ENCODE measurements at regions of chr9 and their contacts with region 1.

Region 1: GRCh38 chr9:72292256-72292682 is 72.7 kb downstream of the ZFAND5 start:
- DNase-seq: peak in 2 of 4 donors; percentile 19 to 29
- ATAC-seq: peak; percentile 68
- H3K4me3 ChIP-seq: no peak overlapping the region
- H3K27ac ChIP-seq: peak overlapping the region; percentile 57 to 81
- H3K4me1 ChIP-seq: peaks cover 6 to 35% of the 10 kb centered on the region in 2 donors
- H3K27me3 ChIP-seq: no peaks in the 10 kb centered on the region
- CTCF ChIP-seq: peak; percentile 57 to 58

Region 2: GRCh38 chr9:72022841-72023240 is 269.4 kb before region 1 on chr9:
- intact Hi-C with region 1: no loop called
- DNase-seq: no peak
- ATAC-seq: peak; percentile 78
- H3K4me3 ChIP-seq: no peak overlapping the region
- H3K27ac ChIP-seq: no peak overlapping the region
- H3K4me1 ChIP-seq: no peaks in the 10 kb centered on the region
- H3K27me3 ChIP-seq: no peaks in the 10 kb centered on the region
- CTCF ChIP-seq: no peak

Region 3: GRCh38 chr9:72365525-72366256 is 73.4 kb after region 1 on chr9:
- intact Hi-C with region 1: no loop called
- DNase-seq: peak; percentile 83 to 94 (median 87)
- ATAC-seq: peak; percentile 50
- H3K4me3 ChIP-seq: peak overlapping the region; percentile 37 to 85
- H3K27ac ChIP-seq: peak overlapping the region; percentile 100
- H3K4me1 ChIP-seq: peaks cover 18 to 37% of the 10 kb centered on the region in 2 donors
- H3K27me3 ChIP-seq: no peaks in the 10 kb centered on the region
- CTCF ChIP-seq: no peak

Region 4: DNA sequence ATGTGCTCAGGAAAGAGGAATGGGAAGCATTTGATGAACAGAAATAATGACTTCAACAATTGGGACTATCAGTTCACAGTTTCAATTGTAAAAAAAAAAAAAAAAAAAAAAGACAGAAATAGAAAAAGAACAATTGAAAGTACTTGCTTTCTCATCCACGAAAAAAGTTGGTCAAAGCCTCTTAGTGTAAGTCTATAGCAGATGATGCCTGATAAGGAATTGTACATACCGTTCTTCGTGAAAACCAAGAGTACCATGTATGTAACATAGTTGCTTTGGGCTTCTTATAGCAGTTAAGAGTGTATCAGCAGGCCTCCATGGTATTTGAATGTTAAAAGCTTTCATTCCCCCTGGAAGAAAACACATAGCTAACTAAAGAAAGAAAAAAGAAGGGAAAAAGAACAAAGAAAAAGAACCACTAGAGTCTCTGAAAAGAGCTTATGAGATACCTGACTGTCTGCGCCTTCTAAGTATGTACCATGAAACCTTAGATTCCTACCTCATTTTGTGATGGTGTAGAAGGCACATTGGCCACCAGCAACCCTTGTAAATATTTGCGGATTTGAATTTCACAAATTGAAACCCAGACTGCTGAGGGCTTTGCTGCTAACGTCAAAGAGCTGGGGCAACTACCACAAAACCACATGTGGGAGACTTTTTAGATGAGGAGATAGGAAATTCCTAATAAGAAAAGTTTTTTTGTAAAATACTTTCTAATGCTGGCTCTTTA is 304.3 kb after region 1 on chr9:
- intact Hi-C with region 1: loop called in 1 of 2 experiments (anchors 5 kb)
- DNase-seq: no peak
- ATAC-seq: no peak
- H3K4me3 ChIP-seq: no peak overlapping the region
- H3K27ac ChIP-seq: no peak overlapping the region
- H3K4me1 ChIP-seq: peaks cover 0 to 27% of the 10 kb centered on the region in 2 donors
- H3K27me3 ChIP-seq: no peaks in the 10 kb centered on the region
- CTCF ChIP-seq: no peak

Region 5: DNA sequence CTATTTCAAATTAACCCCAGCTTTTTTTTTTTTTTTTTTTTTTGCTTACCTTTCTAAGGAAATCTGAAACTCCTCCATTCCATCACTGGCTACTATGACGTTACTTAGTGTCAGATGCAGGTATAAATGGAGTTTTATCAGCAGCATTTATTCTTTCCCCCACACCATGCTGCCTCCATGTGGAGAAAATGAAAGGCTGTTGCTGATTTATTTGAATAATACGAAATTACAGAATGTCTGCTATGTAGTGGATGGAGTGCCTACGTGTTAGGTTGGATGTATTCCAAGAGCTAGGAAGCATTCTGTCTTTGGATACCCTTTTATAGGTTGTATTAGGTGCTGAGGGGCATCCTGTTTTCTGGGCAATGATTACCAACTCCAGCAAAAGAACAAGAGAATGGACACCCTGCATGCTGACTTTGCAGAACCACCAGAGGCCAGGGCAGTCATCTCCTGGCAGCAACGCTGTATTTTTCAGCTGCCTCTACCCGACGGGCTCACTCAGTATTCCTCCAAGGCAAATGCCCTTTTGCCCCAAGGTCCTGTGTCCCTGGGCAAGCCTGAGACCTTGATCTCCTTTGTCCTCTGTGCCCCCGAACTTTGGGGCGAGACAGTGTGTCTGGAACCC is 461.1 kb after region 1 on chr9:
- intact Hi-C with region 1: loop called in 1 of 2 experiments (anchors 10 kb)
- DNase-seq: peak in 2 of 4 donors; percentile 26 to 32
- ATAC-seq: peak; percentile 55
- H3K4me3 ChIP-seq: no peak overlapping the region
- H3K27ac ChIP-seq: no peak overlapping the region
- H3K4me1 ChIP-seq: no peaks in the 10 kb centered on the region
- H3K27me3 ChIP-seq: no peaks in the 10 kb centered on the region
- CTCF ChIP-seq: peak in 1 of 2 donors; percentile 35